CD8-positive, alpha-beta T cell (primary cell): ENCODE measurements at regions of chr16 and their contacts with region 1.

Region 1: DNA sequence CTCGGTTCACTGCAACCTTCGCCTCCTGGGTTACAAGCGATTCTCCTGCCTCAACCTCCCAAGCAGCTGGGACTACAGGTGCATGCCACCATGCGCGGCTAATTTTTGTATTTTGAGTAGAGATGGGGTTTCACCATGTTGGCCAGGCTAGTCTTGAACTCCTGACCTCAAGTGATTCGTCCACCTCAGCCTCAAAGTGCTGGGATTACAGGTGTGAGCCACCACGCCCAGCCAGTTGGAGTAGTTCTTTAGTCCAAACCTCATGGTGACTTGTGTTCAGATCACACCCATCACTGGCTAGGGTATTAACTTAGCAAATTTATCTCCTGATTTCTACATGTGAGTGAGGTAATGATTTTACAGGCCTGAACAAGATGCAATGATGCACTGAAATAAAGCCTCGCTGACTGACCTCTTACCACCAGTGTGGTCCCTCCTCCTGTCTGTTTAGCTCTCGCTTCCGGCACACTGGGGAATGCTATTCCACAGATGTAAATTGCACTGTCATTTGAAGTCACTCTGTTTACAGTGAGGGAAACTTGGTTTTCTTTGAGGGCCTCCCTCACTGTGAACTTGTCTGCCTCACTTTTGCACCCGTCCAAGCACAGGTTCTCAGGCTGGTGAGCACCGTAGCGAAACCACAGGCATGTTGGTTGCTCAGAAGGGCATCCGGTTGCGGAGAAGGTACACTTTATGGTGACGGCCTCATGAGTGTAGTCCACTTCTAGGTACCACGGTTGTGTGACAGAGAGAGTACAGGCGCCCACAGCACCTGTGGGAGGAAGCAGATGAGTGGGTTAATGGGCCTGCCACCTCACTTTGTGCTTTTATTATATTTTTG is 5.5 kb downstream of the IGSF6 start:
- DNase-seq: peak; percentile 42 to 90 (median 71)
- ATAC-seq: peak; percentile 78
- H3K4me3 ChIP-seq: peak overlapping the region in 1 of 2 experiments; percentile 9
- H3K4me3 Mint-ChIP-seq: peak overlapping the region; percentile 74
- H3K27ac ChIP-seq: peak overlapping the region; percentile 58 to 85
- H3K27ac Mint-ChIP-seq: peak overlapping the region; percentile 95
- H3K4me1 ChIP-seq: peaks cover 51% of the 10 kb centered on the region
- H3K4me1 Mint-ChIP-seq: peaks cover 55% of the 10 kb centered on the region
- H3K27me3 ChIP-seq: no peaks in the 10 kb centered on the region
- H3K27me3 Mint-ChIP-seq: no peaks in the 10 kb centered on the region
- CTCF ChIP-seq: no peak

Region 2: DNA sequence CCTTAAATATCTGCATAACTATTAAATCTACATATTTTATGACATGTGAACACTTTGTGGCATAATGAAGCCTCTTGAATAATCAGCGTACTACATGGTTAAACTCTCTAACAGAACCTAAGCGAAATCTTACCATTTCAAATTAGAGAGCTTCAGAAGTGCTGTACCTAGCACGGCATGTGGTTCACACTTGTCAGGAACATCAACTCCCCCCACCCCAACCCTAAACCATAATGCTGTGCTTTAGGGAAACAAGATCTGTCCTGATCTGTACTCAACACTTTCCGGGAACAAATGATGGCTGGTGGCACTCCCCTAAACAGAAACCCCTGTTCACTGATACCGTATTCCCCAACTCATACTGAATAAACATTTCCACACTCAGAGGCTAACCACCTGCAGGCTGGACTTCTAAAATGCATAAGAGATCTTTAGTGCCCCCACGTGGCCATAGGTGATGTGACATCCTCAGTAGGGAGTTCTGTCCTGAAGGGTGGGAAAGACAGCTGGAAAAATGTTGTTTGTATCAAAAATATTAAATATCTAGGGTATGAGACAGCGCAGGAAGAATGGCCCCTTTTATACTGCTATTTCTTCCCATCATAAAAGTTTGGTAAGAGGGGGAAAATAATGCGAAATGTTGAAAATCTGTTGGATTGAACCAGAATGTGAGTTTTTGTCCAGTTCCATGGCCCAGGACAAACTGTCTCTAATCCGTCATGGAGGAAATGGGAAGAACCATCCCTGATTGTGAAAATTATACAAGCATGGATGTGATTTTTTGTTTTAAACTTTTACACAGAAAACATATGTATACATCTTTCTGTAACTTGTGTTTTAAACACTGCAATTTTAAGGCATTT is 1413.7 kb after region 1 on chr16:
- CTCF ChIA-PET with region 1: no interaction called
- POLR2A ChIA-PET with region 1: no interaction called
- intact Hi-C with region 1: loop called in 1 of 2 experiments (anchors 5 kb)
- DNase-seq: peak; percentile 5 to 67 (median 54)
- ATAC-seq: peak; percentile 62
- H3K4me3 ChIP-seq: no peak overlapping the region
- H3K4me3 Mint-ChIP-seq: no peak overlapping the region
- H3K27ac ChIP-seq: no peak overlapping the region
- H3K27ac Mint-ChIP-seq: no peak overlapping the region
- H3K4me1 ChIP-seq: no peaks in the 10 kb centered on the region
- H3K4me1 Mint-ChIP-seq: no peaks in the 10 kb centered on the region
- H3K27me3 ChIP-seq: no peaks in the 10 kb centered on the region
- H3K27me3 Mint-ChIP-seq: peaks cover 12% of the 10 kb centered on the region
- CTCF ChIP-seq: peak; percentile 82